ENCODE measurements at regions of chr17 and their contacts with region 1.

Region 1: DNA sequence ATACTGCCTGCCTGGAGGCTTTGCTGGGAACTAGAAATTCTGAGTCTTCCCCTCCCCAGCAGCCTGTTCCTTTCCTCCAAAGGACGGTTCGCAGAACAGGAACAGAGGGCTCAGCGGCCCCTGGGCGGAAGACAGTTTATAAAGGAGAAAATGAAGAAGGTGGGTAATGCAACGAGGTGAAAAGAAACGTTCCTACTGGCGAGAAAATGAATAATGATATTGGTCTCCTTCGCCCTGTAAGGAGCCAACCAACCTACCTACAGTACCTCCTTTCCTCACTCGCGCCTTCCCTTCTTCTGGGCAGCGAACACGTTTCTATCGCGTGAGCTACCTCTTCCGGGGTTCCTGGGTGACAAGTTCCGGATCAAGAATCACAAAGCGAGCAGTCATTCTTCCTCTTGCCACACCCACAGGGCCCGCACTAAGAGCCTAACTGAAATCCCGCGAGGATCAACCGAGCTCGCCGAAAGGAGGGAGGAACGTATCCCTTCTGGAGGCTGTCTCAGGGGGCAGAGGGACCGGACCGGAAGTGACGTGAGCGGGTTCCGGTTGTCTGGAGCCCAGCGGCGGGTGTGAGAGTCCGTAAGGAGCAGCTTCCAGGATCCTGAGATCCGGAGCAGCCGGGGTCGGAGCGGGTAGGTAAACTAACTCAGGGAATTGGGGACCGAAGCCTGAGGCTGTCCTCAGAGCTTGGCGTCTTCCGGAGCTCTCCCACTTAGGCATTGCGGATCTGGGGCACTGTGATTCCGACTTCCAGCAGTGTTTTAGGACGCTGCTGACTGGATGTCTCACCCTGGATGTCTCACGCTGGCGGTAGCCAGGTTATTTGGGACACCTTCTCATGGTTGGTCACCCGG is at the starts of genes PTRH2 and VMP1:
- DNase-seq: peak; percentile 97
- H3K4me3 Mint-ChIP-seq: peak within 1 kb of the TSS; percentile 96
- H3K27ac Mint-ChIP-seq: peak within 1 kb of the TSS; percentile 93
- H3K4me1 Mint-ChIP-seq: peaks cover 58% of the 10 kb centered on the region
- H3K27me3 Mint-ChIP-seq: no peaks in the 10 kb centered on the region
- total RNA-seq, gene PTRH2: 35.9 TPM
- total RNA-seq, gene VMP1: 517 to 553 TPM

Region 2: DNA sequence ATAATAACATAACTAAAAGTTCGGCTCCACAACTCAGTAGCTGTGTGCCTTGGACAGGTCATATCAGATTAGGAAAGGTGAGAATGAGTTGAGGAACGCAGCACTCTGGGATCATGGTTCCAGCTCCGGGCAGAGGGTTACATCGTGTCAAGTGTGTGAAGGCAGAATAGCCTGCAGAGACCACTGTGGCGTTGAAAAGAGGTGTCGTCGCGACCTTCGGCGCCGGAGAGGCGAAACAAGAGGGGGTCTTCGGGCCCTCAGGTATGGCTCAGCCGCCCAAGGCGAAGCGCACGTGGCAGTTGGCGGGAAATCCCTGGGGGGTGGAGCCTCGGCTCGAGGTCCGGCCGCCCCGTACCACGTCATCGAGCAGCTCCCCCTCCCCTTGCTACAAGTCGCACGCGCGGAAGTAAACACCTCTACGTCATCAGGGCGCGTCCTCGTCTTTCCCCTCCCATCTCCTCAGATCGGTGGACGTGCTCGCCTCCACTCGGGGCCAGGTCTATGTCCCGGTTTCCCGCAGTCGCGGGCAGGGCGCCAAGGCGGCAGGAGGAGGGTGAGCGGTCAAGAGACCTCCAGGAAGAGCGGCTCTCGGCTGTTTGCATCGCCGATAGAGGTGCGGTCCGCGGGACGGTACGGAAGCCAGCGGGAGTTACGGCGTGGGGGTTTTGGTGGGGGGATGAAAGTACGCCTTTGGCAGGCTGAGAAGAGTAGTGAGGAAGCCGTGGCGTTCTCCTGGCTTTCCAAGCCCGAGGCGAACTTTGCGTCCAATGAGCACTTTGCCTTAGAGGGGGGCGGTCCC is 142.0 kb before region 1 on chr17 and contains the start of gene DHX40:
- CTCF ChIA-PET with region 1: no interaction called
- POLR2A ChIA-PET with region 1: interaction called, 3 read pairs
- intact Hi-C with region 1: loop called (anchors 5 kb)
- DNase-seq: peak; percentile 97
- H3K4me3 Mint-ChIP-seq: peak within 1 kb of the TSS; percentile 100
- H3K27ac Mint-ChIP-seq: peak within 1 kb of the TSS; percentile 94
- H3K4me1 Mint-ChIP-seq: peaks cover 22% of the 10 kb centered on the region
- H3K27me3 Mint-ChIP-seq: peaks cover 3% of the 10 kb centered on the region
- total RNA-seq, gene DHX40: 17.9 to 19.0 TPM

Region 3: GRCh38 chr17:59719526-59719925 is 12.2 kb after region 1 on chr17:
- CTCF ChIA-PET with region 1: no interaction called
- POLR2A ChIA-PET with region 1: no interaction called
- intact Hi-C with region 1: no loop called
- DNase-seq: no peak
- H3K4me3 Mint-ChIP-seq: no peak overlapping the region
- H3K27ac Mint-ChIP-seq: no peak overlapping the region
- H3K4me1 Mint-ChIP-seq: peaks cover 27% of the 10 kb centered on the region
- H3K27me3 Mint-ChIP-seq: no peaks in the 10 kb centered on the region